T-cell (primary cell): ENCODE measurements at regions of chr17 and their contacts with region 1.

Region 1: DNA sequence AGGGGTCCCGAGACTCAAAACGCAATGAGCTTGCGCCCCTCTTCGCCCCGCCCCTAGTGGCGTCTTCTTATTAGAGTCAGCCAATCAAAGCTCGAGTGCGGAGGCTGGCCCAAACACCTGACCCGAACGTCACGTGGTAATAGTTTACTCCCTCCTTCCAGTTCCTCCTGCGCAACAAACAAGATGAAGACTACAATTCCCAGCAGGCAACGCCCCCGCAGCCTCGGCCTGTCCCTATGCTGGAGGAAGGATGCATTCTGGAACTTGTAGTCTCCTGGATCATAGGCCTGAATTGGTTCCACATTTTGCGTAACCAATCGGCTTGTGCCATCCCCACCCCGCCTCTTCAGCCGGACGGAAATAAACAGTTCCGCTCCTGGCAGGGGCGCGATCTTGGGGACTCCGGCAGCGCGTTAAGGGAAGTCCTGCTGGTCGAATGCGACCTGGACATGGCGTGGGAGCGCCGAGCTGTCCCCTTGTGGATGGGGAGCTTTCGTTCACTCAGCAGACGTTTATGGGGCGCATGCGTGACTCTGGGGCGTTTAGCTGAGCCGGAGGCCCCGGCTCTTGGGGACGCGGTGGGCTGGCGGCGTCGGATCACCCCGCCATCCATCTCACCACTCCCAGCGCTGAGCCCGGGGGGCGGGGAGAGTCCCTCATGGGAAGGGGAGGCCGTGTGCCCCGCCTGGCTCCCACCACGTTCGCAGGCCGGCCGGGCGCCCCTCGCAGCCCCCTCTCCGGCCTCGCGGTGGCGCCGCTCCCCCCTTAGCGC is at the start of gene WBP2:
- DNase-seq: peak; percentile 91 to 99 (median 98)
- ATAC-seq: peak; percentile 90 to 92 (median 90)
- H3K4me3 ChIP-seq: peak within 1 kb of the TSS; percentile 88 to 90
- H3K4me3 Mint-ChIP-seq: no peak within 1 kb of the TSS
- H3K27ac ChIP-seq: peak within 1 kb of the TSS; percentile 77
- H3K27ac Mint-ChIP-seq: peak within 1 kb of the TSS; percentile 88 to 91
- H3K4me1 ChIP-seq: peaks cover 13 to 38% of the 10 kb centered on the region in 2 experiments
- H3K4me1 Mint-ChIP-seq: peaks cover 32 to 43% (median 35%) of the 10 kb centered on the region in 3 donors
- H3K27me3 ChIP-seq: no peaks in the 10 kb centered on the region
- H3K27me3 Mint-ChIP-seq: no peaks in the 10 kb centered on the region
- total RNA-seq, gene WBP2: 91.4 to 158 (median 138) TPM

Region 2: GRCh38 chr17:75539967-75540711 is 315.4 kb before region 1 on chr17:
- CTCF ChIA-PET with region 1: no interaction called
- POLR2A ChIA-PET with region 1: no interaction called
- DNase-seq: no peak
- ATAC-seq: no peak
- H3K4me3 ChIP-seq: no peak overlapping the region
- H3K4me3 Mint-ChIP-seq: no peak overlapping the region
- H3K27ac ChIP-seq: no peak overlapping the region
- H3K27ac Mint-ChIP-seq: no peak overlapping the region
- H3K4me1 ChIP-seq: peaks cover 4 to 22% of the 10 kb centered on the region in 2 experiments
- H3K4me1 Mint-ChIP-seq: peaks cover 8 to 16% (median 10%) of the 10 kb centered on the region in 3 donors
- H3K27me3 ChIP-seq: peaks cover 0 to 3% of the 10 kb centered on the region in 2 experiments
- H3K27me3 Mint-ChIP-seq: no peaks in the 10 kb centered on the region

Region 3: GRCh38 chr17:75779231-75779986 is 76.1 kb before region 1 on chr17:
- CTCF ChIA-PET with region 1: interaction called in 1 of 2 experiments, 24 read pairs
- POLR2A ChIA-PET with region 1: interaction called, 3 to 24 read pairs
- DNase-seq: peak; percentile 86 to 99 (median 94)
- ATAC-seq: peak; percentile 71 to 74 (median 72)
- H3K4me3 ChIP-seq: peak overlapping the region; percentile 87 to 89
- H3K4me3 Mint-ChIP-seq: peak overlapping the region; percentile 89 to 95 (median 93)
- H3K27ac ChIP-seq: peak overlapping the region; percentile 89
- H3K27ac Mint-ChIP-seq: peak overlapping the region; percentile 97 to 99
- H3K4me1 ChIP-seq: peaks cover 27 to 35% of the 10 kb centered on the region in 2 experiments
- H3K4me1 Mint-ChIP-seq: peaks cover 58 to 63% (median 60%) of the 10 kb centered on the region in 3 donors
- H3K27me3 ChIP-seq: no peaks in the 10 kb centered on the region
- H3K27me3 Mint-ChIP-seq: peaks cover 0 to 1% of the 10 kb centered on the region in 2 donors

Region 4: GRCh38 chr17:75784473-75785015 is 71.0 kb before region 1 on chr17 and contains the start of gene UNK:
- CTCF ChIA-PET with region 1: interaction called in 1 of 2 experiments, 24 read pairs
- POLR2A ChIA-PET with region 1: interaction called, 5 to 24 read pairs
- DNase-seq: peak; percentile 89 to 98 (median 95)
- ATAC-seq: peak; percentile 75 to 82 (median 79)
- H3K4me3 ChIP-seq: peak within 1 kb of the TSS; percentile 75 to 82
- H3K4me3 Mint-ChIP-seq: peak within 1 kb of the TSS; percentile 81 to 91 (median 87)
- H3K27ac ChIP-seq: peak within 1 kb of the TSS; percentile 100
- H3K27ac Mint-ChIP-seq: peak within 1 kb of the TSS; percentile 99 to 100
- H3K4me1 ChIP-seq: peaks cover 27 to 42% of the 10 kb centered on the region in 2 experiments
- H3K4me1 Mint-ChIP-seq: peaks cover 50 to 60% (median 57%) of the 10 kb centered on the region in 3 donors
- H3K27me3 ChIP-seq: no peaks in the 10 kb centered on the region
- H3K27me3 Mint-ChIP-seq: peaks cover 0 to 1% of the 10 kb centered on the region in 2 donors
- total RNA-seq, gene UNK: 37.1 to 50.3 (median 39.2) TPM

Region 5: DNA sequence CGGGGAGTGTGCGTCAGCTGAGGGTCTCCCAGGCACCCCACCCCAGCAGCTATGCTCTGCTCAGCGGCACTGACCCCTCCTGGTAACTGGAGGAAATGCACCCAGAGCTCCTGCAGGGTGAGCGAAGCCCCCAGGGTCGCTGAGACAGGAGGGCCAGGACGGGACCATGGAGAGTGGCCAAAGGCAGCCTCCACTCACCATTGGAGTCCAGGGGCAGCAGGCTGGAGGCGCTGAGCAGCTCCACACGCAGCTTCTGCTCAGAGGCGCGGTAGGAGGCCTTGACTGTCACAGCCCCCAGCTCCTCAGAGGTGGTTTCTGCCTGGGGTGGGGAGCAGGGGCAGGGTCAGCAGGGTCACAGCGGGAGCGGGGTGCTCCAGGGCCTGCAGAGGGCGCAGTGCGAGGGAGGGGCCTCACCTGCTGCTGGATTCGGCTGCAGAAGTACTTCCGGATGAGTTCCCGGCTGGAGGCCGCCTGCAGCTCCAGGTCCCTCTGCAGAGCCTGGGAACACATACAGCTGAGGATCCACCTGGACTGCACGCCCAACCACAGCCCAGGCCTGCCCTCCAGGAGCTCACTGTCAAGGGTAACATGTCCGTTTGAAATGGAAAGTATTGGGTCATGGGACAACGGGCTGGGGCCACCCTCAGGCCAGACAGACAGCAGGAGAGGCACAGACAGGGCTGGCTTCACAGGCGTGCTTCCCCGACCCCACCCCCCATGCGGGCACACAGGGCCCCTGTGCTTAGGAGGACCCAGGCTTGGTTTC is 25.1 kb before region 1 on chr17:
- CTCF ChIA-PET with region 1: interaction called in 1 of 2 experiments, 4 read pairs
- POLR2A ChIA-PET with region 1: interaction called in 1 of 2 experiments, 10 read pairs
- DNase-seq: peak in 12 of 35 experiments; percentile 8 to 56 (median 32)
- ATAC-seq: no peak
- H3K4me3 ChIP-seq: no peak overlapping the region
- H3K4me3 Mint-ChIP-seq: no peak overlapping the region
- H3K27ac ChIP-seq: peak overlapping the region; percentile 34
- H3K27ac Mint-ChIP-seq: no peak overlapping the region
- H3K4me1 ChIP-seq: peaks cover 28 to 74% of the 10 kb centered on the region in 2 experiments
- H3K4me1 Mint-ChIP-seq: peaks cover 35 to 45% (median 39%) of the 10 kb centered on the region in 3 donors
- H3K27me3 ChIP-seq: no peaks in the 10 kb centered on the region
- H3K27me3 Mint-ChIP-seq: no peaks in the 10 kb centered on the region

Region 6: DNA sequence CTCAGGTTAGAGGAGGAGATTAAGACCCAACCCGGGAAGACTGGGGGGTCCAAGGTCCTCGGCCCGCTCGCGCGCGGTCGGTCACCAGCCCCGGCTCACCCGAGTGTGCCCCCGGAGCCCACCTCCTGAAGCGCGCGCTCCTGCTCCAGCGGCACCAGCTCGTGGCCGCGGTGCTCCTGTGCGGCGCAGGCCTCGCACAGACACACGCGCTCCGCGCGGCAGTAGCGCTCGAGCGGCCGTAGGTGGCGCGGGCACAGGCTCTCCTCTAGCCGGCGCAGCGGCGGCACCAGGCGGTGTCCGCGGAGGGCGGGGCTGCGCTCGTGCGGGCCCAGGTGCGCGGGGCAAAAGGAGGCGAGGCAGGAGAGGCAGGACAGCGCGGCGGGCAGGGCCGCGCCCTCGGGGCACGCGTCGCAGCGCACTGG is 22.3 kb after region 1 on chr17:
- CTCF ChIA-PET with region 1: interaction called in 1 of 2 experiments, 33 read pairs
- POLR2A ChIA-PET with region 1: interaction called in 1 of 2 experiments, 4 read pairs
- DNase-seq: peak; percentile 35 to 83 (median 59)
- ATAC-seq: peak; percentile 73 to 79 (median 76)
- H3K4me3 ChIP-seq: peak overlapping the region; percentile 29 to 67
- H3K4me3 Mint-ChIP-seq: peak overlapping the region; percentile 78 to 88 (median 85)
- H3K27ac ChIP-seq: peak overlapping the region; percentile 79
- H3K27ac Mint-ChIP-seq: peak overlapping the region; percentile 90 to 94
- H3K4me1 ChIP-seq: peaks cover 17 to 64% of the 10 kb centered on the region in 2 experiments
- H3K4me1 Mint-ChIP-seq: peaks cover 39 to 56% (median 41%) of the 10 kb centered on the region in 3 donors
- H3K27me3 ChIP-seq: peaks cover 2 to 27% of the 10 kb centered on the region in 2 experiments
- H3K27me3 Mint-ChIP-seq: peaks cover 0 to 4% of the 10 kb centered on the region in 2 donors

Region 7: GRCh38 chr17:75896415-75897159 is 41.1 kb after region 1 on chr17 and contains the start of gene TRIM65:
- CTCF ChIA-PET with region 1: interaction called in 1 of 2 experiments, 10 read pairs
- POLR2A ChIA-PET with region 1: no interaction called
- DNase-seq: peak; percentile 32 to 84 (median 62)
- ATAC-seq: peak; percentile 83 to 89 (median 87)
- H3K4me3 ChIP-seq: peak within 1 kb of the TSS; percentile 58 to 63
- H3K4me3 Mint-ChIP-seq: peak within 1 kb of the TSS; percentile 75 to 83 (median 82)
- H3K27ac ChIP-seq: peak within 1 kb of the TSS; percentile 60
- H3K27ac Mint-ChIP-seq: peak within 1 kb of the TSS; percentile 80 to 82
- H3K4me1 ChIP-seq: peaks cover 4 to 34% of the 10 kb centered on the region in 2 experiments
- H3K4me1 Mint-ChIP-seq: peaks cover 24 to 29% (median 26%) of the 10 kb centered on the region in 3 donors
- H3K27me3 ChIP-seq: no peaks in the 10 kb centered on the region
- H3K27me3 Mint-ChIP-seq: no peaks in the 10 kb centered on the region
- total RNA-seq, gene TRIM65: 22.1 to 52.2 (median 45.9) TPM